CD8-positive, alpha-beta T cell (primary cell): ENCODE measurements at regions of chr1 and their contacts with region 1.

Region 1: GRCh38 chr1:151281969-151282882 is at the start of gene ZNF687:
- DNase-seq: peak; percentile 95 to 100 (median 98)
- ATAC-seq: peak; percentile 84
- H3K4me3 ChIP-seq: peak within 1 kb of the TSS; percentile 72 to 89
- H3K4me3 Mint-ChIP-seq: peak within 1 kb of the TSS; percentile 99
- H3K27ac ChIP-seq: peak within 1 kb of the TSS; percentile 91 to 94
- H3K27ac Mint-ChIP-seq: peak within 1 kb of the TSS; percentile 98
- H3K4me1 ChIP-seq: peaks cover 21% of the 10 kb centered on the region
- H3K4me1 Mint-ChIP-seq: peaks cover 28% of the 10 kb centered on the region
- H3K27me3 ChIP-seq: no peaks in the 10 kb centered on the region
- H3K27me3 Mint-ChIP-seq: no peaks in the 10 kb centered on the region
- CTCF ChIP-seq: no peak
- total RNA-seq, gene ZNF687: 34.0 to 36.3 TPM

Region 2: GRCh38 chr1:151292207-151293030 is 10.2 kb after region 1 on chr1:
- CTCF ChIA-PET with region 1: interaction called, 4 read pairs
- POLR2A ChIA-PET with region 1: interaction called, 11 read pairs
- intact Hi-C with region 1: no loop called
- DNase-seq: peak in 3 of 9 experiments; percentile 24 to 54 (median 25)
- ATAC-seq: peak; percentile 46
- H3K4me3 ChIP-seq: no peak overlapping the region
- H3K4me3 Mint-ChIP-seq: no peak overlapping the region
- H3K27ac ChIP-seq: peak overlapping the region in 1 of 2 experiments; percentile 25
- H3K27ac Mint-ChIP-seq: peak overlapping the region; percentile 76
- H3K4me1 ChIP-seq: no peaks in the 10 kb centered on the region
- H3K4me1 Mint-ChIP-seq: peaks cover 13% of the 10 kb centered on the region
- H3K27me3 ChIP-seq: no peaks in the 10 kb centered on the region
- H3K27me3 Mint-ChIP-seq: no peaks in the 10 kb centered on the region
- CTCF ChIP-seq: no peak

Region 3: DNA sequence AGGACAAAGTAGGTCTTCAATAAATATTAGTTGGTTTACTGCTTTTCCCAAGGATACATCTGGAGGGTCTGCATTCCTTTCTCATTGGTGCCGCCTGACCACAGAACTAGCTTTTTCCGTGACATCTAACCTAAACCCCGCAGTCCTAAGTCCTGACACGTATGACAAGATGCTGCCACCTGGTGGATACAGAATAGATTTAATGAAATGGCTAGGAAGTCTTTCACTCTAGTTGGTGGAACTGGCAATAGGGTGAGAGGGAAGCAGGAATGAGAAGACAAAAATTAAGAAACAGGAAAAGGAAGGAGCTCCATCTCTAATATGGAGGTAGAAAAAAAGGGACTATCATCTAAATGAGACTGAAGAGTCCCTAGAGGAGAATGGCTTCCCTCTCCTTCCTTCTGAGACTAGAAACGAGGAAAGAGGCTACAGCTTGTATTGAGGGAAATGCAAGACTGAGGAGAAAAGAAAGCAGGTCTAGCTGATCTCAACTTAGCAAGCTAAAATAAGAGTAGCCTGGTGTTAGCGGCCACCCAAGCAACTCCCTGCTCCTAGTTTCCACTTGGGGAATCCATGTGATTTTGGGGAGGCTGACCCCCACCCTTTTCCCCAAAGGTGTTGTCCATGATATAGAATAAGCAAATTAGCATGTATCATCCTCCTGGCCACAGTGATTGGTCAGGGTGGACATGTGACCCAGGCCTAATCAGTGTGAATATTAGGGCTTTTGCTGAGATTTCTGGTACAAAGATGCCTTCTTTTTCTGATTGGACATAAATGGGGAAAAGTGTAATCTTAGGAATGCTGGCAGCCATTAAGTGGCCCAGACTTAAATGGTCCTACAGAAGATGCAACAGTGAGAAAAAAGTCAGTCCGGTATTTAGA is 58.9 kb after region 1 on chr1:
- CTCF ChIA-PET with region 1: interaction called, 13 read pairs
- POLR2A ChIA-PET with region 1: interaction called, 8 read pairs
- intact Hi-C with region 1: loop called (anchors 1 kb)
- DNase-seq: peak in 8 of 9 experiments; percentile 24 to 86 (median 54)
- ATAC-seq: peak; percentile 92
- H3K4me3 ChIP-seq: no peak overlapping the region
- H3K4me3 Mint-ChIP-seq: no peak overlapping the region
- H3K27ac ChIP-seq: peak overlapping the region in 1 of 2 experiments; percentile 42
- H3K27ac Mint-ChIP-seq: peak overlapping the region; percentile 50
- H3K4me1 ChIP-seq: peaks cover 6% of the 10 kb centered on the region
- H3K4me1 Mint-ChIP-seq: peaks cover 26% of the 10 kb centered on the region
- H3K27me3 ChIP-seq: no peaks in the 10 kb centered on the region
- H3K27me3 Mint-ChIP-seq: no peaks in the 10 kb centered on the region
- CTCF ChIP-seq: peak; percentile 81

Region 4: DNA sequence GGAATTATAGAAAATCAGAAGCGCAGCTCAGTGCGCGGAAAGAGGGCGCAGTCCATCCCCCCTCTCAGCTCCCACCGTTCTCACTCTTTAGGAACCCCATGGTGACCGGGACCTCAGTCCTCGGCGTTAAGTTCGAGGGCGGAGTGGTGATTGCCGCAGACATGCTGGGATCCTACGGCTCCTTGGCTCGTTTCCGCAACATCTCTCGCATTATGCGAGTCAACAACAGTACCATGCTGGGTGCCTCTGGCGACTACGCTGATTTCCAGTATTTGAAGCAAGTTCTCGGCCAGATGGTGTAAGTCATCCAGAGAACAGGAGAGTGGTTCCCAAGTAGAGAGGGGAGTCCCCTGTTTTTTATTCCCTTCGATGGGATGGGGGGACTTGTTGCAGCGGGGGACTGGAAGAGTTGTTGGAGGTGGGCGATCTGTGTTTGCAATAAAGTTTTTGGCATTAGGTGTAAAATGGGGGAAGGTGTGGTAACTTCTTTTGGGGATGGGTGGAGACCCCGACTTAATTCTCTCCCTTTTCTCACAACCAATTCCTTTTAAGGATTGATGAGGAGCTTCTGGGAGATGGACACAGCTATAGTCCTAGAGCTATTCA is 117.8 kb after region 1 on chr1:
- CTCF ChIA-PET with region 1: no interaction called
- POLR2A ChIA-PET with region 1: interaction called, 6 read pairs
- intact Hi-C with region 1: loop called (anchors 1 kb)
- DNase-seq: peak in 1 of 9 experiments; percentile 13
- ATAC-seq: no peak
- H3K4me3 ChIP-seq: peak overlapping the region; percentile 90 to 94
- H3K4me3 Mint-ChIP-seq: peak overlapping the region; percentile 89
- H3K27ac ChIP-seq: peak overlapping the region; percentile 93 to 94
- H3K27ac Mint-ChIP-seq: peak overlapping the region; percentile 97
- H3K4me1 ChIP-seq: peaks cover 16% of the 10 kb centered on the region
- H3K4me1 Mint-ChIP-seq: peaks cover 27% of the 10 kb centered on the region
- H3K27me3 ChIP-seq: no peaks in the 10 kb centered on the region
- H3K27me3 Mint-ChIP-seq: no peaks in the 10 kb centered on the region
- CTCF ChIP-seq: no peak

Region 5: GRCh38 chr1:151411884-151412283 is 129.7 kb after region 1 on chr1:
- CTCF ChIA-PET with region 1: no interaction called
- POLR2A ChIA-PET with region 1: no interaction called
- intact Hi-C with region 1: no loop called
- DNase-seq: no peak
- ATAC-seq: no peak
- H3K4me3 ChIP-seq: no peak overlapping the region
- H3K4me3 Mint-ChIP-seq: no peak overlapping the region
- H3K27ac ChIP-seq: no peak overlapping the region
- H3K27ac Mint-ChIP-seq: no peak overlapping the region
- H3K4me1 ChIP-seq: no peaks in the 10 kb centered on the region
- H3K4me1 Mint-ChIP-seq: no peaks in the 10 kb centered on the region
- H3K27me3 ChIP-seq: no peaks in the 10 kb centered on the region
- H3K27me3 Mint-ChIP-seq: no peaks in the 10 kb centered on the region
- CTCF ChIP-seq: no peak

Region 6: DNA sequence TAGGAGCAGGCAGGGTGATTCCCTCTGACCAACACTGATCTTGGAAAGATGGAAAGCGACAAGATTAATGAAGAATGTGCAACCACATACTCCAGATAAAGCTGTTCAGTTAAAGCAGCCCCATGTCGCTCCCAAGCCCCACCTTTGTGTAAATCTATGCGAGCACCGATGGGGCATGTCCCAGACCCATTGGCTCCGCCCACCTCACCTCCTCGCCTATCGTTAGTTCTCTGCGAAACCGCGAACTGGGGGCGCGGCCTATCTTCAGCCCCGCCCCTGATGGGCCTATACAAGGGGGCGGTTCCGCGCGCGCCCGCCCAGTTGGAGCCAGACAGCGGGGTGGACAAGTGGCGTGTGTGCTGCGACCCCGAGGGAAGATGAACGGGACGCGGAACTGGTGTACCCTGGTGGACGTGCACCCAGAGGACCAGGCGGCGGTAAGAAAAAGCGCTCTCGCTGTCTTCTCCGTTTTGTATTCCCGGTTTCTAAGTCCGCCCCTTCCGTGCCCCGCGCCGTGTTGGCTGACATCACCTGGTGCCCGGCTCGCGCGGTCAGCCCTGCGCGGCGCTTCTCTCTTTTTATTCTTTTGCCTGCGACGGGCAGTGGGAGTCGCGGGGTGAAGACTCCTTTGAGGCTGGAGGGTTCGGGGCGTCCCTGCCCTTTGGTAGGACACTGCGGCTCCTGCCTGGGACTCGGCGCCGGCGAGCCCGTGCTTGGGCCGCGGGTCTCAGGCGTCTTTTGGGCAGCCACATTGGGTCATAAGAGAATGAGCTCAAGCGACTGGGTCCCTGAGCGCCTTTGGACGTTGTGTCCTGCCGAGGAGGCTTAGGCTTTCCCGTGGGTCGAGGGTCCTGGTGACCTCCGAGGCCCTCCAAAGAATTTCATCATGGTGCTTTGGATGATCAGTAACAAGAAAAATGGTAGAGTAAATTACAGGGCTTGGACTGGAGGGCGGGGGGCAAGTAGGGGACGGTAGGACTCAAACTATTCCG is 258.1 kb after region 1 on chr1 and contains the start of gene TUFT1:
- CTCF ChIA-PET with region 1: no interaction called
- POLR2A ChIA-PET with region 1: no interaction called
- intact Hi-C with region 1: loop called in 1 of 2 experiments (anchors 10 kb)
- DNase-seq: peak; percentile 86 to 97 (median 94)
- ATAC-seq: peak; percentile 99
- H3K4me3 ChIP-seq: peak within 1 kb of the TSS; percentile 74 to 78
- H3K4me3 Mint-ChIP-seq: peak within 1 kb of the TSS; percentile 95
- H3K27ac ChIP-seq: peak within 1 kb of the TSS in 1 of 2 experiments; percentile 29
- H3K27ac Mint-ChIP-seq: peak within 1 kb of the TSS; percentile 82
- H3K4me1 ChIP-seq: peaks cover 14% of the 10 kb centered on the region
- H3K4me1 Mint-ChIP-seq: peaks cover 21% of the 10 kb centered on the region
- H3K27me3 ChIP-seq: peaks cover 4 to 16% of the 10 kb centered on the region in 2 experiments
- H3K27me3 Mint-ChIP-seq: no peaks in the 10 kb centered on the region
- CTCF ChIP-seq: no peak
- total RNA-seq, gene TUFT1: 8.5 TPM